Posterior cingulate gyrus (tissue), 11 donors: ENCODE measurements at regions of chr17 and their contacts with region 1.

Region 1: DNA sequence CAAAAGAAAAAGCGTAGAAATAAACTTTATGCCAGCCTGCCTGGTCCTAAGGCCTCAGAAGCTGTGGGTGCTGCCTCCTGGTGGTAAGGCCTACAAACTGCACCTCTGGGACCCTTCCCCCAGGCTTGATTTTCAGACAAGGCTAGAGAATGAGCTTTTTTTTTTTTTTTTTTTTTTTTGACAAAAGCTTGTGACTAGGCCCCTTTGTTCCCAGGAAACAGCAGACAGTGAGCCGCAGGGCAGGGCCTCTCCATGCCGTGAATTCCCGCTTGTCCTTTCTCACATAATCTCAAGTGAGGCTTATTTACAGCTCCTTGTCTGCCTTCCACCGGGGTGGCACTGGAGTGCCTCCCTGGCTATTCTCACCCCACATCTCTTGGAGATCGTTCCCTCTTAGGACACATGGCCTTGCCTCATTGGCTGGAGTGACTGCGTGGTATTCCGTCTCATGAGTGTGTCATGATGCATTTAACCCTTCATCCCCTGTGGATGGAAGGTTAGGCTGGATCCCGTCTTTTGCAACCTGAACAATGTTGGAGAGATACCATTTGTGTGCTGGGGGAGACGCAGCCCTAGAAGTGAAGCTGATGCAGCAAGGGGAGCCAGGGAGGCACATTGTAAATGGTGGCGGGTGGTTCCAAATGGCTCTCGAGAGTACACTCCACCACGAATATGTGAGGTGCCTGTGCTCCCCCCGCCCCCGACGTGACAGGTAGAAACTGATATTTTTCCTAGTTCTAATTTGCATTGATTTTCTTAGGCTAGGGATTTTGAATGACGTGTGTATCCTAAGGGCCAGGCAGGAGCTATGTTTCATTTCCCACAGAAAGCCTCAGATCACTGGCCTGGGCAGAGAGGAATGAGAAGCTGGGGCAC is 49.6 kb downstream of the USP22 start:
- DNase-seq: peak; percentile 66 to 96 (median 80)

Region 2: DNA sequence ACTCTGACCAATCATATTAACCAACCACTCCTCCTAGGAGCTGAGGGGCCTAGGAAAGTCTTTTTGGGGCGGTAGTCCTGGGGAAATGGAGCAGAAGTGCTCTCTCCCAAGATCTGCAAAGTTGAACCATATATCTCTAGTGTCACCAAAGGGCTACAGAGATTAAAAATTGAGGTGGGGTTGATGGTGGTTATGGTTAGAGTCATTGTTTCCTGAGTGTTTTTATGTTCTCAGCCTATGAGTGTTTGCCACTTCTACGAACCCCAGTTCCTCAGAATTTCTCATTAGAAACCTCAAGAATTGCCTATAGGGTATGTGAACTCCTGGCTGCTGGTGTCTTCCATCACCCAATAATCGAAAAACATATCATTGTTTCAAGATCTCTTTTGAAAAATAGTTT is 195.9 kb before region 1 on chr17:
- intact Hi-C with region 1: loop called (anchors 2 kb)
- DNase-seq: no peak

Region 3: DNA sequence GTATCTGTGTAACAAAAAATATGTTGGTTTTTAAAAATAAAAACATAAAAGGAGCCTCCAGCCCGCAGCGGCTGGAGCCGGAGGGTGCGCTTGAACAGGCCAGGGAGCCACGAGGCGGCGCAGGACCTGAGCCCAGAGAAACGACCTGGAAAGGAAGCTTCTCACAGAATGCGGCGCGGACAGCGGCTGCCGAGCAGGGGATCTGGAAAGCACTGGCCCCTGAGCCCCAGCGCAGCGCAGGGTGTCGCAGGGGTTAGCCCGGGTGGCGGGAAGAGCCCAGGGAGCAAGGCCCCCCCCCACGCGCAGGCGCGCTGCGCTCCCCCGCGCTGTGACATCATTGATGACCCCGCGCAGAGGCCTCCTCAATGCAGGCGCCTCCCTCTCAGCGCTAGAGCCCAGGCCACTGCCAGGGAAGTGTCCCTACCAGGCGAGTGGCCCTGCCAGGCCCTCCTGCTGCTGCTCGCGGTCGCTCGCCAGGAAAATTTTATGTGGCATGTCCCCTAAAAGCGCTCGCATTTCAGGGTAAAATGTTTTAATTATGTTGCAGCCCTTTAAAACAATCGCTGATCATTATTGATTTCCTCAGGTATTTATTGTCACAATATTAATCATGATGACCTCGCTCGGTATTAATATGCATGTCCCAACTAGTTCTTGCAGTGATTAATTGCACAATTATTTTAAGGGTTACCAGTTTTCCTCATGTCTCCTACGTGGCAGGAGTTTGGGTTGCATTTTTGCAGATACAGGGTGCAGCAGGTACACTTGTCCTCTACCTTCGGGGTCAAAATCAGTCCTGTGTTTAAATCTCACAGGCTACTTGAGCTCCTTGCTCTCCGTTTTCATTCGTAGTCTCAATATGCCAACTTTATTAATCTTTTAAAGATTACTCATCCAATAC is 84.6 kb before region 1 on chr17:
- intact Hi-C with region 1: loop called (anchors 2 kb)
- DNase-seq: peak; percentile 81 to 99 (median 92)

Region 4: GRCh38 chr17:21043286-21044232 is 50.3 kb after region 1 on chr17:
- intact Hi-C with region 1: no loop called
- DNase-seq: peak; percentile 94 to 100 (median 98)